Activated CD8-positive, alpha-beta T cell treated with anti-CD3 and anti-CD28 coated beads for 36 hours (primary cell): ENCODE measurements at regions of chr19 and their contacts with region 1.

Region 1: GRCh38 chr19:14347999-14348889 is 33.0 kb upstream of the ADGRE5 start:
- DNase-seq: peak; percentile 75
- ATAC-seq: peak; percentile 78
- H3K4me3 Mint-ChIP-seq: peak overlapping the region; percentile 14
- H3K27ac Mint-ChIP-seq: no peak overlapping the region
- H3K4me1 Mint-ChIP-seq: peaks cover 12% of the 10 kb centered on the region
- H3K27me3 Mint-ChIP-seq: no peaks in the 10 kb centered on the region
- CTCF ChIP-seq: peak; percentile 99

Region 2: DNA sequence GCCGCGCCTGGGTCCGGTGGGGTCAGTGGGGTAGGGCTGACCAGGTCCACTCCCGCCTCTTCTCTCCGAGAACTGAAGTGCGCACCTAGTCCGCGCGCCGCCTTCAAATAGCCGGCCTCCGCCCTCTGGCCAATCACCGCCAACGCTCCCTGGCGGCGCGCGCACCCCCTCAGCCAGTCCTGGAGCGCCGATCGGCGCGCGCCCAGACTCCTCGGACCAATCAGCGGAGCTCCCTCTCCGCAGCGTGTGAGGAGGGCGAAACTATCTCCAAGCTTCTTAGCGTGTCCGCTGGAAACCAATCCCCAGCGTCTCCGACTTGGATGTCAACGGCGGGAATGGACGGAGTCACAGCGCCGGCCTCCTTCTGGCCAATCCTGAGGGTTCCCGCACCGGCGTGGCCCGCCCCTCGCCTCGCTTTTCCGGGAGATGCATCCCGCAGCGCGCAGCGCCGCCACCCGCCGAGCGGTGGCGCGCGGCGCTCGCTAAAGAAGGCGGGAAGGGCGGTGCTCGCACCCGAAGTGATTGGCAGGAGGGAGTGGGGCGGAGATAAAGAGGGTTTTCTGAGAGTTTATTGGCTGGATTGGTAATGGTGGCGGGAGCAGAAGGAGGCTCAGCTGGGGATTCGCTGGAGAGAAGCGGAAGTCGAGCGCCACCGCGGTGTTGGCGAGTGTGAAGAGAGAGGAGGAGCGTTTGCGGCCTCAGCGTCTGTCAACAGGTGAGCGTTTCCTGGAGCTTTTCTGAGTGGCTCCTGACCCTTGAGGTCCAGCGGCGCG is 211.5 kb before region 1 on chr19 and contains the start of gene ASF1B:
- CTCF ChIA-PET with region 1: interaction called, 15 read pairs
- POLR2A ChIA-PET with region 1: interaction called, 4 read pairs
- intact Hi-C with region 1: no loop called
- DNase-seq: peak; percentile 99
- ATAC-seq: peak; percentile 83
- H3K4me3 Mint-ChIP-seq: peak within 1 kb of the TSS; percentile 95
- H3K27ac Mint-ChIP-seq: peak within 1 kb of the TSS; percentile 98
- H3K4me1 Mint-ChIP-seq: peaks cover 36% of the 10 kb centered on the region
- H3K27me3 Mint-ChIP-seq: no peaks in the 10 kb centered on the region
- CTCF ChIP-seq: peak; percentile 67
- total RNA-seq, gene ASF1B: 53.5 to 55.3 TPM

Region 3: GRCh38 chr19:14198384-14199376 is 149.6 kb before region 1 on chr19:
- CTCF ChIA-PET with region 1: interaction called, 89 read pairs
- POLR2A ChIA-PET with region 1: interaction called, 3 read pairs
- intact Hi-C with region 1: loop called (anchors 5 kb)
- DNase-seq: no peak
- ATAC-seq: no peak
- H3K4me3 Mint-ChIP-seq: no peak overlapping the region
- H3K27ac Mint-ChIP-seq: no peak overlapping the region
- H3K4me1 Mint-ChIP-seq: peaks cover 22% of the 10 kb centered on the region
- H3K27me3 Mint-ChIP-seq: no peaks in the 10 kb centered on the region
- CTCF ChIP-seq: no peak

Region 4: DNA sequence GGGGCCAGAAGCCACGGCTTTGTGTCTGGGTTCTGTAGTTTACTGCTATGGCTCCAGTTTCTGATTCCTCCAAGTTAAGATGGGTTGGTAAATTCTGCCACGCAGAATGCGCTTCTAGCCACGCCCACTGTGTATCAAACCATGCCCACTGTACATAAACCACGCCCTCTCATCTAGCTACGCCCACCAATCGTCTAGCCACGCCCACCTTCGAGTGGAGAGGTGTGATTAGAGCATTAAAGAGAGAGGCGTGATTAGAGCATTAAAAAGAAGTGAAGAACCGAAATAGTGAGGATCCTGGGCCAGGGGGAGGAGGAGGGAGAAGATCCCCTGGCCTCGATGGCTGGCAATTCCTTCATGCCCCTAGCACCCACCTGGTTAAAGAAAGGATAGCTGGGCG is 10.7 kb before region 1 on chr19:
- CTCF ChIA-PET with region 1: interaction called, 29 read pairs
- POLR2A ChIA-PET with region 1: interaction called, 6 read pairs
- intact Hi-C with region 1: no loop called
- DNase-seq: peak; percentile 63
- ATAC-seq: peak; percentile 56
- H3K4me3 Mint-ChIP-seq: no peak overlapping the region
- H3K27ac Mint-ChIP-seq: no peak overlapping the region
- H3K4me1 Mint-ChIP-seq: peaks cover 9% of the 10 kb centered on the region
- H3K27me3 Mint-ChIP-seq: no peaks in the 10 kb centered on the region
- CTCF ChIP-seq: no peak

Region 5: GRCh38 chr19:14405758-14406644 is 57.8 kb after region 1 on chr19:
- CTCF ChIA-PET with region 1: interaction called, 29 read pairs
- POLR2A ChIA-PET with region 1: interaction called, 6 read pairs
- intact Hi-C with region 1: no loop called
- DNase-seq: peak; percentile 93
- ATAC-seq: peak; percentile 84
- H3K4me3 Mint-ChIP-seq: peak overlapping the region; percentile 26
- H3K27ac Mint-ChIP-seq: peak overlapping the region; percentile 66
- H3K4me1 Mint-ChIP-seq: peaks cover 21% of the 10 kb centered on the region
- H3K27me3 Mint-ChIP-seq: no peaks in the 10 kb centered on the region
- CTCF ChIP-seq: peak; percentile 90

Region 6: GRCh38 chr19:14529254-14530004 is 181.2 kb after region 1 on chr19 and contains the start of gene TECR:
- CTCF ChIA-PET with region 1: no interaction called
- POLR2A ChIA-PET with region 1: no interaction called
- intact Hi-C with region 1: no loop called
- DNase-seq: peak; percentile 100
- ATAC-seq: peak; percentile 99
- H3K4me3 Mint-ChIP-seq: peak within 1 kb of the TSS; percentile 88
- H3K27ac Mint-ChIP-seq: peak within 1 kb of the TSS; percentile 96
- H3K4me1 Mint-ChIP-seq: peaks cover 32% of the 10 kb centered on the region
- H3K27me3 Mint-ChIP-seq: no peaks in the 10 kb centered on the region
- CTCF ChIP-seq: no peak
- total RNA-seq, gene TECR: 93.5 to 98.5 TPM